Activated B cell treated with CpG ODN at 0.5 μM for 24 hours (primary cell): ENCODE measurements at regions of chr3 and their contacts with region 1.

Region 1: GRCh38 chr3:157618075-157618760 is 115.0 kb upstream of the VEPH1 start:
- DNase-seq: no peak
- ATAC-seq: peak; percentile 93
- H3K4me3 Mint-ChIP-seq: no peak overlapping the region
- H3K27ac Mint-ChIP-seq: no peak overlapping the region
- H3K4me1 Mint-ChIP-seq: no peaks in the 10 kb centered on the region
- H3K27me3 Mint-ChIP-seq: peaks cover 16% of the 10 kb centered on the region
- CTCF ChIP-seq: no peak

Region 2: DNA sequence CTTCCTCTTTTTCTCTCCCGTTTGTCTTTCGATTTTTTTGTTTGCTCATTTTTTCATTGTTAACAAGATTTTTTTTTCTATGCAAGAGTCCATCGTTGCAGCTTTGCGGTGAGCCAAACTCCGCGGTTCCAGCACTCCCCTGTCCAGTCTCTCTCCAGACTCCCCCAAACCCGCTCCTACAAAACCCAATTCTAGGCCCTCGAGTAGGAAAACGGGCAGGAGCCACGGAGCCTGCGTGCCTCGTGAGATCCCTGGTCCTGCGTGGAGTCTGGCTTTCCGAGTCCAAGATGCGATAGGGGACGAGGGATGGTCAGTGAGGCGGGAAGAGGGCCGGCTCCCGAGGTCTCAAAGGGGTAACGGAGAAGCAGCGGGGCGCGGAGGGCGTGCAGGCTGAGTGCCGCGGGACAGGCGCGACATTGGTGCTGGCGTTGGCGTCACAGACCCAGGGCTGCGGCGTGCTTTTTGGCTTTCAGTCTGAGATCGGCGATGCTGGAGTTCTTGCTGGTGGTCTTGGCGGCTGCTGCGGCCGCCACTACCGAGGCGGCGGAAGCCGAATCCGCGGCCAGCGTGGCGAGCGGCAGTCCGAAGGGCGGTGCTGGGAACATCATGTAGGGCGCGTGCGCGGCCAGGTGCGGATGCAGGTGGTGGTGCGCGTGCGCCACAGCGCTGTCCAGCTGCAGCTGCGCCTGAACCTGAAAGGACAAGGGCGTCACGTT is 479.5 kb after region 1 on chr3:
- CTCF ChIA-PET with region 1: no interaction called
- POLR2A ChIA-PET with region 1: no interaction called
- intact Hi-C with region 1: loop called (anchors 1 kb)
- DNase-seq: peak; percentile 79
- ATAC-seq: peak; percentile 93
- H3K4me3 Mint-ChIP-seq: peak overlapping the region; percentile 98
- H3K27ac Mint-ChIP-seq: peak overlapping the region; percentile 74
- H3K4me1 Mint-ChIP-seq: peaks cover 22% of the 10 kb centered on the region
- H3K27me3 Mint-ChIP-seq: peaks cover 57% of the 10 kb centered on the region
- CTCF ChIP-seq: no peak

Region 3: DNA sequence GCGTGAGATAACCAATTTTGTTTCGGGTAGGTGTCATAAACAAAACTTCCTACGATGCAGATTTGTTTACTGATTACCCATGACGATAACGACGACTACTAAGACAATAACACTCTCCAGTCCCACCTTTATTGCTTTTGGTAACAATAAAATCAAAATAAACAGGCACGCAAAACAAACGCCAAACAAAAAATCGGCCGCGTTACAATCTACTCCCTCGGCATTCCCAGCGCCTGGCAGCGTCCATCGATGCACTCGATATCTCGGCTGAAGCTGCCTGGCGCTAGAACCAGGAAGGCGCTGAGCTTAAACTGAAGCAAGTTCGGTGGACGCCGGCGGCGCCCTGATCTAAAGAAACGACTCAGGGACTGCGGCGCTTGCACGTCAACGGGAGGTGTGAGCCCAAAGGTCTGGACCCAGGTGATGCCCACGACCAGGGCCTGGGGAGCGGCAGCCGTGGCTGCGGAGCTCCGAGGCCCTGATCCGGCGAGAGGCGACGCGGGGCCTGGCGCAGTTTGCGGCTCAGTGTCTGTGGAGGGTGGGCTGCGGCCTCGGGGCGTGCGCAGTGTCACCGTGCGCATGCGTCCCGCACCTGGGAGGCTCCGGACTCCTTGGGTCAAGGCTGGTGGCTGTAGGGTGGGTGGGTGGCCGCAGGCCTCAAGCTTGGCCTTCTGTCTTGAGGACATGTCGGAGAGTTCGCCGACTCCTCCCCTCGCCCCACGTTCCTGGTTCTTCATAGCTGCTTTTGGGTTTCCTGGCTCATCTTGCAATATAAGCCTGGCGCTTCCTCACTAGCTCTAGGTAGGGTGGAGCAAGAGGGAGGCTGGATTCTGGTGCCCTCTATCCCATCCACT is 491.8 kb after region 1 on chr3 and contains the start of gene RSRC1:
- CTCF ChIA-PET with region 1: no interaction called
- POLR2A ChIA-PET with region 1: no interaction called
- intact Hi-C with region 1: loop called (anchors 5 kb)
- DNase-seq: peak; percentile 72
- ATAC-seq: peak; percentile 89
- H3K4me3 Mint-ChIP-seq: peak within 1 kb of the TSS; percentile 90
- H3K27ac Mint-ChIP-seq: peak within 1 kb of the TSS; percentile 83
- H3K4me1 Mint-ChIP-seq: peaks cover 48% of the 10 kb centered on the region
- H3K27me3 Mint-ChIP-seq: peaks cover 31% of the 10 kb centered on the region
- CTCF ChIP-seq: no peak
- total RNA-seq, gene RSRC1: 39.9 and 44.8 TPM in 2 replicates

Region 4: DNA sequence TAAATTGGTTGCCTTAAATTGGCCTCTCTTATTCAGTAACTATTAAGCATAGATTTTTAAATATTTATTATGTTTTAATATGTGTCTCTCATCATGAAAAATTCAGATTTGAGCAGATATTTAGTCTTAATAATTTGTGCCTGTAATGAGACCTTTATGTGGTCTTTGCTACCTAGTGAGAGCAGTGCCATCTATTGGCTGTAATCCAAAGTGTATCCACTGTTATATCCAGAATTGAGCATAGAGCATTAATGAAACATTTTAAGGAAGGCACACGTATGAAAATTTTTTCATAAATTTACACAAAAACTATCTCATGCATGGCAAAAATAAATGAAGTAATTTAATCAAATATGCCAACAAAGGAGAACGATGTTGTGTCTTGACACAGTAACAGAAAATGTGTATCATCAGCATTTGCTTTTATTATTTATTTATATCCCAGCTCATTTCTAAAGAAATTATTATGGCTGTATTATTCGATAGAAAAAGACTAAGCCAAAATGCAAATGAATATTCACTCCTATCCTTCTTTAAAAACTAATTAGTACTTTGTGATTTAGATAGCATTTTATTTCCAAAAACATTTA is 695.2 kb after region 1 on chr3:
- CTCF ChIA-PET with region 1: no interaction called
- POLR2A ChIA-PET with region 1: no interaction called
- intact Hi-C with region 1: loop called (anchors 1 kb)
- DNase-seq: no peak
- ATAC-seq: no peak
- H3K4me3 Mint-ChIP-seq: no peak overlapping the region
- H3K27ac Mint-ChIP-seq: no peak overlapping the region
- H3K4me1 Mint-ChIP-seq: no peaks in the 10 kb centered on the region
- H3K27me3 Mint-ChIP-seq: no peaks in the 10 kb centered on the region
- CTCF ChIP-seq: no peak